HepG2 (cell line): ENCODE measurements at regions of chr5 and their contacts with region 1.

Region 1: GRCh38 chr5:147188200-147189108 is 46.4 kb upstream of the STK32A start:
- DNase-seq: peak; percentile 66
- ATAC-seq: peak; percentile 88
- H3K4me3 ChIP-seq: no peak overlapping the region
- H3K27ac ChIP-seq: no peak overlapping the region
- H3K4me1 ChIP-seq: no peaks in the 10 kb centered on the region
- H3K27me3 ChIP-seq: no peaks in the 10 kb centered on the region
- CTCF ChIP-seq: peak; percentile 83
- EP300 ChIP-seq: no peak
- POLR2A ChIP-seq: no peak
- RAD21 ChIP-seq: peak; percentile 88

Region 2: GRCh38 chr5:146541958-146542849 is 646.2 kb before region 1 on chr5:
- CTCF ChIA-PET with region 1: interaction called, 4 read pairs
- POLR2A ChIA-PET with region 1: no interaction called
- in situ Hi-C with region 1: loop called (anchors 10 kb)
- intact Hi-C with region 1: no loop called
- DNase-seq: peak; percentile 38
- ATAC-seq: peak; percentile 98
- H3K4me3 ChIP-seq: no peak overlapping the region
- H3K27ac ChIP-seq: no peak overlapping the region
- H3K4me1 ChIP-seq: no peaks in the 10 kb centered on the region
- H3K27me3 ChIP-seq: no peaks in the 10 kb centered on the region
- CTCF ChIP-seq: peak; percentile 86
- EP300 ChIP-seq: no peak
- POLR2A ChIP-seq: no peak
- RAD21 ChIP-seq: 0 out of 2 replicates have a peak, but pooled peaks have one; percentile 35

Region 3: GRCh38 chr5:146965761-146966659 is 222.4 kb before region 1 on chr5:
- CTCF ChIA-PET with region 1: interaction called, 4 read pairs
- POLR2A ChIA-PET with region 1: no interaction called
- in situ Hi-C with region 1: no loop called
- intact Hi-C with region 1: loop called (anchors 1 kb)
- DNase-seq: peak; percentile 78
- ATAC-seq: peak; percentile 99
- H3K4me3 ChIP-seq: no peak overlapping the region
- H3K27ac ChIP-seq: no peak overlapping the region
- H3K4me1 ChIP-seq: no peaks in the 10 kb centered on the region
- H3K27me3 ChIP-seq: no peaks in the 10 kb centered on the region
- CTCF ChIP-seq: peak; percentile 91
- EP300 ChIP-seq: no peak
- POLR2A ChIP-seq: no peak
- RAD21 ChIP-seq: peak; percentile 73

Region 4: GRCh38 chr5:147156012-147156411 is 32.4 kb before region 1 on chr5:
- CTCF ChIA-PET with region 1: no interaction called
- POLR2A ChIA-PET with region 1: no interaction called
- in situ Hi-C with region 1: no loop called
- intact Hi-C with region 1: no loop called
- DNase-seq: no peak
- ATAC-seq: no peak
- H3K4me3 ChIP-seq: no peak overlapping the region
- H3K27ac ChIP-seq: no peak overlapping the region
- H3K4me1 ChIP-seq: no peaks in the 10 kb centered on the region
- H3K27me3 ChIP-seq: no peaks in the 10 kb centered on the region
- CTCF ChIP-seq: no peak
- EP300 ChIP-seq: no peak
- POLR2A ChIP-seq: no peak
- RAD21 ChIP-seq: no peak

Region 5: GRCh38 chr5:147169399-147169798 is 19.1 kb before region 1 on chr5:
- CTCF ChIA-PET with region 1: no interaction called
- POLR2A ChIA-PET with region 1: interaction called, 5 read pairs
- in situ Hi-C with region 1: no loop called
- intact Hi-C with region 1: loop called (anchors 2 kb)
- DNase-seq: peak; percentile 62
- ATAC-seq: peak; percentile 45
- H3K4me3 ChIP-seq: peak overlapping the region in 2 of 3 experiments; percentile 8 to 30; a peak in 1 of 6 replicates
- H3K27ac ChIP-seq: peak overlapping the region; percentile 92
- H3K4me1 ChIP-seq: peaks cover 73% of the 10 kb centered on the region
- H3K27me3 ChIP-seq: no peaks in the 10 kb centered on the region
- CTCF ChIP-seq: no peak
- EP300 ChIP-seq: peak in 1 of 2 experiments; percentile 74; a peak in 2 of 4 replicates
- POLR2A ChIP-seq: no peak
- RAD21 ChIP-seq: no peak